ENCODE measurements at regions of chr10 and their contacts with region 1.

Region 1: GRCh38 chr10:16809074-16809718 is 8.0 kb downstream of the RSU1 start:
- DNase-seq: peak in 7 of 9 experiments; percentile 27 to 69 (median 39)
- ATAC-seq: peak; percentile 77
- H3K4me3 ChIP-seq: no peak overlapping the region
- H3K4me3 Mint-ChIP-seq: no peak overlapping the region
- H3K27ac ChIP-seq: no peak overlapping the region
- H3K27ac Mint-ChIP-seq: peak overlapping the region; percentile 14
- H3K4me1 ChIP-seq: no peaks in the 10 kb centered on the region
- H3K4me1 Mint-ChIP-seq: peaks cover 31% of the 10 kb centered on the region
- H3K27me3 ChIP-seq: no peaks in the 10 kb centered on the region
- H3K27me3 Mint-ChIP-seq: no peaks in the 10 kb centered on the region
- CTCF ChIP-seq: peak; percentile 32

Region 2: DNA sequence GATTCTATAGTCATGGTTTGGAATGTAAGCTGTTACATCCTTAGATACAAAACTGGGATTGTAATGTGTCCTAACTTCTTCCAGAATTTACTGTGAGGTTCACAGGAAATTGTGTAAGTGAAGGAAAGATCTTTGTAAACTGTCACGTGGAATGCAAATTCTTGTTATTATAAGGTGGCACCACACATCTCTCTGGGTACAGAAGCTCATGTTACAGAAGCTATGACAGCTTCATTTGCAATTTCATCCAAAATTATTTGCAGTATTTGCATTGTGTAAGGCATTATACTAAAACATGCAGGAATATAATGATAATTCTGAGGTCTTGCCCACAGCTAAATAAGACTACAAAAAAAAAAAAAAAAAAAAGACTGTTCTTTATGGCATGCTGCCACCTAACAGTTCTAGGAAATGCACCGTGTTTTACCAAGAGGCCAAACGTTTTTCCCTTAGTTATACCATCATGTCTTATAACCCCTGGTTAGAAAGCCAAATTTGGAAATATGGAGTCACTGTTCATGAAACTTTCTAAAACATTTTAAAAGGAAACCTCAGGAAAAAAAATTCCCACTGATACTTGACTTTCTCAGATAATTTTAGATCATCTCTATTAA is 966.5 kb before region 1 on chr10:
- CTCF ChIA-PET with region 1: no interaction called
- POLR2A ChIA-PET with region 1: no interaction called
- intact Hi-C with region 1: no loop called
- DNase-seq: no peak
- ATAC-seq: no peak
- H3K4me3 ChIP-seq: no peak overlapping the region
- H3K4me3 Mint-ChIP-seq: no peak overlapping the region
- H3K27ac ChIP-seq: no peak overlapping the region
- H3K27ac Mint-ChIP-seq: no peak overlapping the region
- H3K4me1 ChIP-seq: no peaks in the 10 kb centered on the region
- H3K4me1 Mint-ChIP-seq: peaks cover 27% of the 10 kb centered on the region
- H3K27me3 ChIP-seq: no peaks in the 10 kb centered on the region
- H3K27me3 Mint-ChIP-seq: no peaks in the 10 kb centered on the region
- CTCF ChIP-seq: no peak

Region 3: GRCh38 chr10:16570731-16571130 is 238.5 kb before region 1 on chr10:
- CTCF ChIA-PET with region 1: no interaction called
- POLR2A ChIA-PET with region 1: no interaction called
- intact Hi-C with region 1: no loop called
- DNase-seq: no peak
- ATAC-seq: no peak
- H3K4me3 ChIP-seq: no peak overlapping the region
- H3K4me3 Mint-ChIP-seq: no peak overlapping the region
- H3K27ac ChIP-seq: no peak overlapping the region
- H3K27ac Mint-ChIP-seq: no peak overlapping the region
- H3K4me1 ChIP-seq: no peaks in the 10 kb centered on the region
- H3K4me1 Mint-ChIP-seq: peaks cover 3% of the 10 kb centered on the region
- H3K27me3 ChIP-seq: peaks cover 0 to 4% of the 10 kb centered on the region in 2 experiments
- H3K27me3 Mint-ChIP-seq: peaks cover 25% of the 10 kb centered on the region
- CTCF ChIP-seq: no peak

Region 4: DNA sequence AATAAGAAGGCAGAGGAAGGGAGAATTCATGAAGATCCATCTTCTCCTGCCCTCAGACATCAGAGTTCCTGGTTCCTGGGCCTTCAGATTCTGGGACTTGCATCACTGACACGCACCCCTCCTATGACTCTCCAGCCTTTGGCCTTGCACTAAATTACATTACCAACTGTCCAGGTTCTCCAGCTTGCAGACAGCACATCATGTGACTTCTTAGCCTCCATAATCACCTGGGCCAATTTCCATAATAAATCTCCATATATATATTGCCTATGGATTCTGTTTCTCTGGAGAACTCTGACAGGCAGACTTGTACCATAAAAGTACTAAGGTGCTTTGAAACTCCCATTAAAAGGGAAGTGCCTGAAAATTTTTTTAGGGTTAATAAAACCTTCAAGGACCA is 15.2 kb before region 1 on chr10:
- CTCF ChIA-PET with region 1: interaction called, 3 read pairs
- POLR2A ChIA-PET with region 1: interaction called, 3 read pairs
- intact Hi-C with region 1: loop called in 1 of 2 experiments (anchors 1 kb)
- DNase-seq: no peak
- ATAC-seq: no peak
- H3K4me3 ChIP-seq: no peak overlapping the region
- H3K4me3 Mint-ChIP-seq: no peak overlapping the region
- H3K27ac ChIP-seq: no peak overlapping the region
- H3K27ac Mint-ChIP-seq: no peak overlapping the region
- H3K4me1 ChIP-seq: peaks cover under 1% of the 10 kb centered on the region
- H3K4me1 Mint-ChIP-seq: peaks cover 26% of the 10 kb centered on the region
- H3K27me3 ChIP-seq: no peaks in the 10 kb centered on the region
- H3K27me3 Mint-ChIP-seq: no peaks in the 10 kb centered on the region
- CTCF ChIP-seq: no peak

Measured in CD8-positive, alpha-beta T cell (primary cell).